Cardiac septum (tissue), 1 donor: ENCODE measurements at regions of chr21 and their contacts with region 1.

Region 1: DNA sequence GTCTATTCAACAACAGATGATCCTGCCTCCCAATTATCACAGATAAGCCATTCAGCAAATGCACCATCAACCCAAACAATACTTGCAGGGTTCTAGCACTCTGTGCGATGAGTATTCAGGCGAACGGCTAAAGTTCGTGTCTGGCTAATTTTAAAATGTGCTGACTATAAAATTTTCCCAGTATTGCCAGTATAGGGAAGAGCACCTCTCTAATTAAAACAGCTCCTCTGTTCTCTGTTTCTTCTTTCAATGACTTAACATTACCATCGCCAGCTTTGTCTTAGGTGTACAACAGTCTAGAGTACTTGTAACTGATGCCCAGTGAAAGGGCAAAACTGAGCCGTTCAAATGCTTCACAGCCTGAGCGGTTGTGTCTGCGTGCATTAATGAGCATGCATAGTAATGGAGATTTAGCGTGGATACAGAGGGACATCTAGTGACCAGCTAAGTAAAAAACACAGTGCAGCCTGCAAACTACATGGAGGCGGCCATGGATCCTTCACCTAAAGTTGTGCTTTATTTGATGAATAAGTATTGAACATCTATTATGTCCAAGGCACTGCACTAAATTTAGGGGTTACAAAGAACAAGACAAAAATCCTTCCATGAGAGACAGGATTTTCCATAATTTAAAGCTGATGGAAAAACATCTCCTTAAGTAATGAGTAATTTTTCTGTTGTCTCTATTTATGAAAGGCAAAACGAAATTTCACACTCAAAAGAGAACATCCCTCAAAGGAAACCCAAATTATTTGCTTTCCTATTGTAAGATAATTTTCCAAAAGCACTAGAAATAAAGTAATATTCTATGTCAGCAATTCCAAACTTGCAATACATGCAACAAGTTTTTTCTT is 120.0 kb downstream of the SETD4 start:
- DNase-seq: no peak

Region 2: GRCh38 chr21:34693192-34693810 is 1247.0 kb before region 1 on chr21:
- intact Hi-C with region 1: loop called (anchors 5 kb)
- DNase-seq: no peak